Aorta (tissue), 5 donors: ENCODE measurements at regions of chr1 and their contacts with region 1.

Region 1: GRCh38 chr1:221203224-221204054 is 324.2 kb downstream of the HLX start:
- DNase-seq: peak; percentile 83 to 90
- ATAC-seq: peak; percentile 87
- H3K4me3 ChIP-seq: no peak overlapping the region
- H3K27ac ChIP-seq: no peak overlapping the region
- H3K4me1 ChIP-seq: peaks cover 0 to 6% of the 10 kb centered on the region in 2 donors
- H3K27me3 ChIP-seq: no peaks in the 10 kb centered on the region

Region 2: DNA sequence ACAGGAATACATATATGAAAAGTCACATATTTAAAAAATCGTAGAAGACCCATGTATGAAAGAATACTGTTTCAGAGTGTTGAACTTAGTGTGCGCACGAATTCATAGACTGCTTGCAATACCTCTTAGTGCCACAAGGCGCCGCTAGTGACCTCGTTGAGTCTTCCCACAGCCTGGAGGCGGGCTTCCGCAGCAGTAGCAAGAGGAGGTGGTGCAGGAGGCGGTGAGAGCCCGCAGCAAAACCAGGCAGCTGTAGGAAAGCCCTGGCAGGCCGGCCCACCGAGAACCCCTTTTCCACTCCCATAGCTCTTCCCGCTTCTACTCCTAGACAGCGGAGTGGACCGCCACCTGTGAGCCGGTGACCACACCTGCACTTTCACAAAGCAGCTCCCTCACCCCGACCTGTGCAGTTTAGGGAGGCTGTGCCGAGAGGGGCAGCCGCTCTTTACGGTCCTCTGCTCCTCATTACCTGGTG is 393.2 kb before region 1 on chr1:
- intact Hi-C with region 1: loop called (anchors 5 to 10 kb)
- DNase-seq: peak; percentile 89 to 93
- ATAC-seq: peak; percentile 94
- H3K4me3 ChIP-seq: no peak overlapping the region
- H3K27ac ChIP-seq: no peak overlapping the region
- H3K4me1 ChIP-seq: no peaks in the 10 kb centered on the region
- H3K27me3 ChIP-seq: no peaks in the 10 kb centered on the region

Region 3: GRCh38 chr1:220852408-220852807 is 351.0 kb before region 1 on chr1:
- intact Hi-C with region 1: no loop called
- DNase-seq: no peak
- ATAC-seq: no peak
- H3K4me3 ChIP-seq: no peak overlapping the region
- H3K27ac ChIP-seq: no peak overlapping the region
- H3K4me1 ChIP-seq: no peaks in the 10 kb centered on the region
- H3K27me3 ChIP-seq: no peaks in the 10 kb centered on the region

Region 4: DNA sequence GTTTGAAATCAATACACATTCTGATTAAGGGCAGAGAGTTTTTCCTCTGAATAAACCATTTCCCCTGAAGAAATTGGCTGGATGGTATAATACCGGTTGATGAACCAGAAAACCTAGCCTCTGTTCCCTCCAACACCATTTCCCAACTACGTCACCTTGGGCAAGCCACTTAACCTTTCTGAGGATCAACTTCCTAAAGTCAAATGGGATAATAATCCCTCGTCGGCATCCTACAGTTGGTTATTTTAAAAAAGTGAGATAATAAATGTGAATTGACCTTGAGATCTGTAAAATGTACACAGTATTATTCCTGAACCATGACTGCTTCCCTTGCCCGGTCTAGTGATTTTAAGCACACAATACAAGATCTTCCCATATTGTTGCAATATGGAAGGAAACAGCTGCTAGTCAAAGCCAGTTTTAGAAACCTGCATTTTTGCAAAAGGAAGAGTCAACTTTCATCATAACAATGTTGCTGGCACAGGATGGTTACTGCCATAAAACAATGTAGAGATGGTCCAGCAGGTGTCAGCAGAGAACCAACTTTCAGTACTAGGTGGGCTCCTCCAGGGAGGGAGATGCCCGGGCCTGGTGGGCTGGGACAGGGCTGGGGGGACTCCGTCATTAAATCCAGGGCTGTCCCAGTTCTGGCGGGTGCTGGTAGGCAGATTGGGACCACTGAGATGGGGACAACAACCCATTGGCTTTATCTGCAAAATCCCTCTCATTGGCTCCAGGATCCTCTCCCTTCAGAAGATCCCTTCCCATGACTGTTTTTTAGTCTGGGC is 329.4 kb before region 1 on chr1:
- intact Hi-C with region 1: loop called (anchors 5 kb)
- DNase-seq: no peak
- ATAC-seq: peak; percentile 56
- H3K4me3 ChIP-seq: no peak overlapping the region
- H3K27ac ChIP-seq: no peak overlapping the region
- H3K4me1 ChIP-seq: no peaks in the 10 kb centered on the region
- H3K27me3 ChIP-seq: no peaks in the 10 kb centered on the region

Region 5: GRCh38 chr1:220879076-220879508 is 324.3 kb before region 1 on chr1 and contains the start of gene HLX:
- intact Hi-C with region 1: loop called (anchors 5 kb)
- DNase-seq: peak; percentile 97
- ATAC-seq: peak; percentile 95
- H3K4me3 ChIP-seq: peak within 1 kb of the TSS; percentile 72 to 84
- H3K27ac ChIP-seq: peak within 1 kb of the TSS in 1 of 2 donors; percentile 60
- H3K4me1 ChIP-seq: no peaks in the 10 kb centered on the region
- H3K27me3 ChIP-seq: no peaks in the 10 kb centered on the region
- total RNA-seq, gene HLX: 13.1 to 21.6 TPM

Region 6: GRCh38 chr1:221458447-221459156 is 255.2 kb after region 1 on chr1:
- intact Hi-C with region 1: no loop called
- DNase-seq: no peak
- ATAC-seq: peak; percentile 66
- H3K4me3 ChIP-seq: no peak overlapping the region
- H3K27ac ChIP-seq: no peak overlapping the region
- H3K4me1 ChIP-seq: no peaks in the 10 kb centered on the region
- H3K27me3 ChIP-seq: no peaks in the 10 kb centered on the region